ENCODE measurements at regions of chr4 and their contacts with region 1.

Region 1: DNA sequence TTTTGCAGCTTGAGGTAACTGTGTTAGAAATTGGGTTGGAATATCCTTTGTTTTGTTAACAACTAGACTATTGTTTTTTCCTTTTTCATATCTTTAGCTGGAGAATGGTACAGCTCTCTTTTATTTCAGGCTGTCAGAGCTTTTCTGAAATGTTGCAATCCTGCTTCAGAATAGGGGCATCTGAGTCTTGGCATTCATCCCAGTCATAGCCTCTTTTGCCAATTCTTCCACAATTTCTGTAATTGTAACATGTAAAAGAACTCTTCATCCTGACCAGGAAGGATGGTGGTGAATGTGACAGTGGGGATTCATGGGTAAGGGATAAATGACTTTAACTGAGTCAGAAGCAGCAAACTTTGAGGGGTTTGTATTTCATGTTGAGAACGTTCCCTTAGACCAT is 128.8 kb downstream of the FHIP1A start:
- DNase-seq: no peak
- ATAC-seq: no peak
- H3K4me3 ChIP-seq: no peak overlapping the region
- H3K27ac ChIP-seq: no peak overlapping the region
- H3K4me1 ChIP-seq: peaks cover 47 to 58% of the 10 kb centered on the region in 2 donors
- H3K27me3 ChIP-seq: no peaks in the 10 kb centered on the region
- CTCF ChIP-seq: no peak
- POLR2A ChIP-seq: no peak

Region 2: DNA sequence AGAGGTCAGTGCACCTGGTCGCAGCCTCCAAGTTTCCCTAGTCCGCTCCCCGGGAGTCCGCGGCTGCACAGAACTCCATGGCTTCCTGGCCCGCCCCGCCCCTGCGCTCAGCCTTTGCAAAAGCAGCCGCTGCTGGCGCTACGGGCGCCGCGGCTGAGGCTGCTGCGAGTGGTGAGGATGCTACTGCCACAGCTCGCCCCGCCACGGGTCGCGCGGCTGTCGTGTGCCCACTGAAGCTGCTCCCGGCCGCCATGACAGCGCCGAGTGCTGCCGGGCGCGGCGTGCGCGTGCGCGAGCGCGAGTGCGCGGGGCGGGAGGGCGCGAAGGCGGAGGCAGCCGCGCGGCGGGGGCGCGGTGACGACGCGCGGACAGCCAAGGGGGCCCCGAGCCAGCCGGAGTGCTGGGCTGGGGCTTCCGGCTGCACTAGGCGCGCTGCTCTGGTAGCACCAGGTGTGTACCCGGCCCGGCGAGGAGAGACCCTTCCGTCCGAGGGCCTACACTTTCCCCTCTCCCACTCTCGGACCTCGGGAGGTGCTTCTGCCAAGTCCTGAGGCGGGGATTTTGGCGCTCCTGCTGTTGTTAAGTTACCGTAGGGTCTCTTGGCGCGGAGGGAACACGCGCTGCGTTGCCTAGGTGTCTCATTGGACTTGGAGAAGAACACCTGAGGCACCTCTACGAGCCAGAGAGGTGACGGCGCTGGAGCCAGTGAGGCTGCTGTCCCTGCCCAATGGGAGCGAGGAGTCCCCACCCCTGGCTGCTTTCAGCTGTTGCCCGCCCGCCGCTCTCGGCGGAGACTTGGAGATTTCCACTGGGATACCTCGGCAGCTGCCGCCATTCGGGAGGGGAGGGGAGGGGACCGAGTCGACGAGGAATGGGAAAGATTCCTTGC is 522.0 kb before region 1 on chr4:
- in situ Hi-C with region 1: no loop called
- intact Hi-C with region 1: no loop called
- DNase-seq: peak; percentile 27 to 62
- ATAC-seq: peak; percentile 85 to 86
- H3K4me3 ChIP-seq: peak overlapping the region; percentile 81 to 97 (median 93)
- H3K27ac ChIP-seq: peak overlapping the region; percentile 83 to 89 (median 86)
- H3K4me1 ChIP-seq: peaks cover 18% of the 10 kb centered on the region in 2 donors
- H3K27me3 ChIP-seq: no peaks in the 10 kb centered on the region
- CTCF ChIP-seq: no peak
- POLR2A ChIP-seq: peak; percentile 58 to 59

Region 3: GRCh38 chr4:151638020-151638858 is 100.5 kb after region 1 on chr4:
- in situ Hi-C with region 1: no loop called
- intact Hi-C with region 1: loop called (anchors 5 kb)
- DNase-seq: no peak
- ATAC-seq: no peak
- H3K4me3 ChIP-seq: no peak overlapping the region
- H3K27ac ChIP-seq: peak overlapping the region in 3 of 4 donors; percentile 20 to 61 (median 32)
- H3K4me1 ChIP-seq: peaks cover 19 to 24% of the 10 kb centered on the region in 2 donors
- H3K27me3 ChIP-seq: no peaks in the 10 kb centered on the region
- CTCF ChIP-seq: no peak
- POLR2A ChIP-seq: no peak